ENCODE measurements at regions of chr11 and their contacts with region 1.

Region 1: GRCh38 chr11:101866619-101867491 is 48.0 kb upstream of the CEP126 start:
- DNase-seq: no peak
- ATAC-seq: no peak
- H3K4me3 ChIP-seq: no peak overlapping the region
- H3K27ac ChIP-seq: no peak overlapping the region
- H3K4me1 ChIP-seq: no peaks in the 10 kb centered on the region
- H3K27me3 ChIP-seq: no peaks in the 10 kb centered on the region
- CTCF ChIP-seq: no peak

Region 2: DNA sequence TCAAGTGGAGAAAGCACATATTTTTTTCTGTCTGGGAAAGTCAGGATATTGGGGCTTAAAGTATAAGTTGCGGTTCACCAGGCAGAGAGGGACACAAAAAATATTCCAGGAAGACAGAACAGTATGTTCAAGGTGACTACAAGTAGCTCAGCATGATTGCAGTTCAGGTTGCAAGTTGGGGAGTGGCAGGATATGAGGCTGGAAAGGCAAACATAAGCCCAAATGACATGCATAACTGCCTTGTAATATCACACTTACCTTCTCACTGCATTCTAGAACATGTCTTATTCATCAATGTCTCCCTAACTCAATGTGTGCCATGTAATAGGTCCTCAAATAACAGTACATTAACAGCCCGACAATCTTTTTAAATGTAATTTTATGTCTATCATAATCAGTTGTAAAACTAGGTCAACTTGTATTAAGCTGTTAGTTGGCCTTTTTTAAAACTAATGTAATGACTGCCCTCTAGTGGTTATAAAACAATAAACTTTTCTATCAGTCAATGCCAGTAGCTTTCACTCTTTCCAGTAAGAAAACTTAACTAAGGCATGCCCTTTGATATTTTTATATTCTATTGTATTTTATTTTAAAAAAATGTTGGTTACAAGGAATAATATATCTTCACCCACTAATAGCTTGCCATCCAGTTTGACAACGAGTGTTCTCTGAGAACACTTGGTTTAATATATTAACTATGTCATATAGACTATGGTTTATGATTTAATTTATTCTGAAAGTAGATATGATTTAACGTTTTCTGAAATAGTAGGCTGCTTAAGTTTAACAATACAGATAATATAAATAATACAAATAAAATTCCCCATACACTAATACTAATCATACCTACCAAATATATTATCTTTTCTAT is 140.9 kb after region 1 on chr11:
- intact Hi-C with region 1: loop called (anchors 5 kb)
- DNase-seq: no peak
- ATAC-seq: peak; percentile 88
- H3K4me3 ChIP-seq: no peak overlapping the region
- H3K27ac ChIP-seq: peak overlapping the region; percentile 67
- H3K4me1 ChIP-seq: peaks cover 12% of the 10 kb centered on the region
- H3K27me3 ChIP-seq: no peaks in the 10 kb centered on the region
- CTCF ChIP-seq: peak; percentile 56

Region 3: DNA sequence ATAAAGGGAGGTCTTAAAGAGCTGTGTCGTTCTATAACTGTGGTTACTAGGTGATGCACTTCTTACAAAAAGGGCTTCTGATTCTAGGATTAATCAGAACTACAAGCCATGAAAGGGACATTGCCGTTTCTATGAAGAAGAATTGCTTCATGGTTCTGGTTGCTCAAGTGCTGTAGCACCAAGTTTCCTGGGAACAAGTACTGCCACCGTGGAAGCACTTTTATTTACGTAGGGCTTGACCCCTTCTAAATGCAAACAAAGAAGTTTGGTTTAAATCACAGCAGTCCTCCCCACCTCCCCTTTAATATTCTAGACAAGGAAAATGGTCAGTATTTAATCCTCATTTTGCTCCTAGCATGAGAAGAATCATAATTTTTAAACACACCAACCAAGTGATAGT is 253.1 kb after region 1 on chr11:
- intact Hi-C with region 1: no loop called
- DNase-seq: no peak
- ATAC-seq: peak; percentile 45 to 62
- H3K4me3 ChIP-seq: no peak overlapping the region
- H3K27ac ChIP-seq: peak overlapping the region; percentile 18
- H3K4me1 ChIP-seq: peaks cover 57% of the 10 kb centered on the region
- H3K27me3 ChIP-seq: no peaks in the 10 kb centered on the region
- CTCF ChIP-seq: no peak

Region 4: DNA sequence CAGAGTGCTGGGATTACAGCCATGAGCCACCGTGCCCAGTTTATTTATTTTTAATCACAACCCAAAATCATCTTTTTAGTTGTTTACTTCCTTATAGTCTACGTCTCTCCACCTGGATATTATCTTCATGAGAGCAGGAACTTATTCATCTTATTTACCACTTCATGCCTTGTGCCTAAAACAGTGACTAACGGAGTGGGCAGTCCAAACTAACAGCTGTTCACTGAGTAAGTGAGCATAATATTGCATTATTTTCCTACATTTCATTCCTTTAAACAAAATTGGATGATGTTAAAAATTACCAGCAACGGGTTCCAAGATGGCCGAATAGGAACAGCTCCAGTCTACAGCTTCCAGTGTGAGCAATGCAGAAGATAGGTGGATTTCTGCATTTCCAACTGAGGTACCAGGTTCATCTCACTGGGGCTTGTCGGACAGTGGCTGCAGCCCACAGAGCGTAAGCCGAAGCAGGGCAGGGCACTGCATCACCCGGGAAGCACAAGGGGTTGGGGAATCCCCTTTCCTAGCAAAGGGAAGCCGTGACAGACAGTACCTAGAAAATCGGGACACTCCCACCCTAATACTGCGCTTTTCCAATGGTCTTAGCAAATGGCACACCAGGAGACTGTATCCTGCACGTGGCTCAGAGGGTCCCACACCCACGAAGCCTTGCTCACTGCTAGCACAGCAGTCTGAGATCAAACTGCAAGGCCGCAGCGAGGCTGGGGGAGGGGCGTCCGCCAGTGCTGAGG is 571.6 kb after region 1 on chr11:
- intact Hi-C with region 1: no loop called
- DNase-seq: peak; percentile 61
- ATAC-seq: no peak
- H3K4me3 ChIP-seq: no peak overlapping the region
- H3K27ac ChIP-seq: no peak overlapping the region
- H3K4me1 ChIP-seq: peaks cover 6% of the 10 kb centered on the region
- H3K27me3 ChIP-seq: no peaks in the 10 kb centered on the region
- CTCF ChIP-seq: no peak

Region 5: GRCh38 chr11:102476812-102477211 is 610.0 kb after region 1 on chr11:
- intact Hi-C with region 1: no loop called
- DNase-seq: no peak
- ATAC-seq: peak; percentile 85 to 88
- H3K4me3 ChIP-seq: no peak overlapping the region
- H3K27ac ChIP-seq: peak overlapping the region; percentile 38
- H3K4me1 ChIP-seq: peaks cover 19% of the 10 kb centered on the region
- H3K27me3 ChIP-seq: no peaks in the 10 kb centered on the region
- CTCF ChIP-seq: no peak

Measured in lower lobe of right lung (tissue), 2 donors.